Ascending aorta (tissue), 2 donors: ENCODE measurements at regions of chrX and their contacts with region 1.

Region 1: GRCh38 chrX:135973548-135974278 is at the start of gene MMGT1:
- DNase-seq: peak; percentile 46 to 87
- H3K4me3 ChIP-seq: peak within 1 kb of the TSS; percentile 70 to 71
- H3K27ac ChIP-seq: peak within 1 kb of the TSS; percentile 92
- H3K4me1 ChIP-seq: peaks cover 0 to 7% of the 10 kb centered on the region in 2 donors
- H3K27me3 ChIP-seq: no peaks in the 10 kb centered on the region
- CTCF ChIP-seq: no peak
- total RNA-seq, gene MMGT1: 11.2 TPM

Region 2: DNA sequence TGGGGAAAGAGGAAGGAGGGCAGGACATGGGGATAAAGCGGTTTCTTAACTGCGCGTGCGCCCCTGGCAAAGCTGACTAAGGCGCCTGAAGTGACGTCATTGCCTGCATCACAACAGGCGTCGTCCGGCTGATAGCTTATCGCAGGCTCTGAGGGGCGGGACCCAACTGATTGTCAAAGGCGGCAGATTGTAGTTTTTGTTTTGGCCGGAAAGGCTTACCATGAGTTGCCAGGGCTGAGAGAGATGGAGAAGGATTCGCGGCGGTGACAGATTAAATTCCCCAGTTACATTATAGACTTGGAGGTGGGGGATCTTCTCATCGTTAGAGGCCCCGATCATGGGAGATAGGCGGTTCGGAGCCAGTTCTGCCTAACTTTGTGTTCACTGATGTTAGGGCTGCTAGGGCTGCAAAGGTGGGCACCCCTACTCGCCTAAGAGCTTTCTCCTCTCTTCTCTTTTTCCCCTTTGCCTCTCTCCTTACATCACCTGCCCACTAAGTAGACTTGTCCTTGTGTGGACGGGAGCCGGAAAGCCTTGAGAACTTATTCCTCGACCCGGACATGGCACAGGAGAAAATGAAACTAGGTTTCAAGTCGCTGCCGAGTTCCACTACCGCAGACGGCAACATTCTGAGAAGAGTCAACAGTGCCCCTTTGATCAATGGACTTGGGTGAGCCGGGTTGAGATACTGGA is 1166.5 kb before region 1 on chrX:
- intact Hi-C with region 1: loop called (anchors 10 kb)
- DNase-seq: peak; percentile 55 to 94
- H3K4me3 ChIP-seq: peak overlapping the region; percentile 32 to 61
- H3K27ac ChIP-seq: peak overlapping the region; percentile 58 to 70
- H3K4me1 ChIP-seq: no peaks in the 10 kb centered on the region
- H3K27me3 ChIP-seq: no peaks in the 10 kb centered on the region
- CTCF ChIP-seq: no peak

Region 3: GRCh38 chrX:135521405-135522189 is 452.1 kb before region 1 on chrX:
- intact Hi-C with region 1: loop called (anchors 1 kb)
- DNase-seq: peak; percentile 46 to 88
- H3K4me3 ChIP-seq: peak overlapping the region; percentile 60 to 82
- H3K27ac ChIP-seq: peak overlapping the region; percentile 94 to 97
- H3K4me1 ChIP-seq: no peaks in the 10 kb centered on the region
- H3K27me3 ChIP-seq: no peaks in the 10 kb centered on the region
- CTCF ChIP-seq: no peak

Region 4: GRCh38 chrX:135923353-135923752 is 50.4 kb before region 1 on chrX:
- intact Hi-C with region 1: no loop called
- DNase-seq: no peak
- H3K4me3 ChIP-seq: no peak overlapping the region
- H3K27ac ChIP-seq: no peak overlapping the region
- H3K4me1 ChIP-seq: no peaks in the 10 kb centered on the region
- H3K27me3 ChIP-seq: no peaks in the 10 kb centered on the region
- CTCF ChIP-seq: no peak

Region 5: DNA sequence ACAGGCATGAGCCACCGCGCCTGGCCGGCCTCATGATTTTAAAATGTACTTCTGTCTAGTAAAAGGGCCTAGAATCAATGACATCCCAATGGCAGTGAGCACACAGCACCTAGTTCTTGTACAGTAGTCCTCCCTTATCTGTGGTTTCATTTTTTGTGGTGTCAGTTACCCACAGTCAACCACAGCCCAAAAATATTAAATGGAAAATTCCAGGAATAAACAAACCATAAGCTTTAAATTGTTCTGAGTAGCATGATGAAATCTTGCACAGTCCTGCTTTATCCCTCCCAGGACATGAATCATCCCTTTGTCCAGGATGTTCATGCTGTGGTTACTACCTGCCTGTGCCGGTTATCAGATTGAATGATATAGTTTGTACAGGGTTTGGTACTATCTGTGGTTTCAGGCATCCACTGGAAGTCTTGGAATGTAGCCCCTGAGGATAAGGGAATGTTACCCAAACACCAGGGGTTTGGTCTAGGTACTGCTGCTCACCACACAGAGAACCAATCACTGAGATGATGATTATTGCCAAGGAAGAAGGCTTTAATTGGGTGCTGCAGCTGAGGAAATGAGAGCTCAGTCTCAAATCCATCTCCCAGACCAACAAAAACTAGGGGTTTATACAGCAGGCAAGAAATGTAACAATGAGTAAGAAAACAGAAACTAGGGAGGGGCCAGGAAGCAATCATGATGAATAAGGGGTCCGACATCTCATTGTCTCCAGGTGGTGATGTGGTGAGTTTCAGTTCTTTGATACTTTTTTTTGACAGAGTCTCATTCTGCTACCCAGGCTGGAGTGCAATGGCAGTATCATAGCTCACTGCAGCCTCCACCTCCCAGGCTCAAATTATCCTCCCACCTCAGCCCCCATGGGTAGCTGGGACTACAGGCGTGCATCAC is 157.5 kb after region 1 on chrX:
- intact Hi-C with region 1: no loop called
- DNase-seq: no peak
- H3K4me3 ChIP-seq: no peak overlapping the region
- H3K27ac ChIP-seq: no peak overlapping the region
- H3K4me1 ChIP-seq: peaks cover 0 to 7% of the 10 kb centered on the region in 2 donors
- H3K27me3 ChIP-seq: no peaks in the 10 kb centered on the region
- CTCF ChIP-seq: no peak

Region 6: GRCh38 chrX:136423724-136424123 is 450.0 kb after region 1 on chrX:
- intact Hi-C with region 1: no loop called
- DNase-seq: no peak
- H3K4me3 ChIP-seq: no peak overlapping the region
- H3K27ac ChIP-seq: no peak overlapping the region
- H3K4me1 ChIP-seq: no peaks in the 10 kb centered on the region
- H3K27me3 ChIP-seq: no peaks in the 10 kb centered on the region
- CTCF ChIP-seq: no peak

Region 7: GRCh38 chrX:136496770-136497598 is 523.3 kb after region 1 on chrX and contains the start of gene HTATSF1:
- intact Hi-C with region 1: loop called (anchors 5 kb)
- DNase-seq: peak; percentile 49 to 93
- H3K4me3 ChIP-seq: peak within 1 kb of the TSS; percentile 58 to 75
- H3K27ac ChIP-seq: peak within 1 kb of the TSS; percentile 86 to 93
- H3K4me1 ChIP-seq: no peaks in the 10 kb centered on the region
- H3K27me3 ChIP-seq: peaks cover 3% of the 10 kb centered on the region
- CTCF ChIP-seq: peak in 1 of 3 experiments; percentile 3
- total RNA-seq, gene HTATSF1: 3.7 TPM

Region 8: GRCh38 chrX:136909706-136910564 is 936.2 kb after region 1 on chrX:
- intact Hi-C with region 1: loop called (anchors 5 kb)
- DNase-seq: peak; percentile 40 to 91
- H3K4me3 ChIP-seq: peak overlapping the region; percentile 69 to 72
- H3K27ac ChIP-seq: peak overlapping the region; percentile 78 to 85
- H3K4me1 ChIP-seq: no peaks in the 10 kb centered on the region
- H3K27me3 ChIP-seq: no peaks in the 10 kb centered on the region
- CTCF ChIP-seq: no peak